ENCODE measurements at regions of chr15 and their contacts with region 1.

Region 1: DNA sequence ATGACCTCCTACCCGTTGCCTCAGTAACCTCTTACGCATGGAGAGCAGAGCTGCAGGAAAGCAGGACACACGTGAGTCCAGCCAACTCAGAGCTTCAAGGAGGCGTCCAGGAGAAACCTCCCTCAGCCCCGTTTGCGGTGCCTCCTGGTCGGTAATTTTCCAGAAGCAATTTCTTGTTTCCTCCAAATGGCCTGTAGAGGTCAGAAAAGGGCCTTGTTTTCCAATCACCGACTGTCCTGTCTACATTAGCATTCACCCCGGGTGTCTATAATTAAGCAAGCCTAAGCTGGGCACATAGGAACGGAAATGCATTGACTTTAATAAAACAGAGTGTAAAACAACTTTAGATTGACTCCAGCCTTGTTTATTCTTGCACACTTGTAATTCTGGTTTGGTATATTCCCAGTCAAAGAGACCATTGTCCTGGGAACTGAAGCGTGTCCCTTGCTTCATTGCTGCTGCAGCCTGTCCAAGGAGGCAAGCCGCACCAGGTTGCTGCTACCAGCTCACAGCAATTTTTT is 836.2 kb downstream of the AGBL1 start:
- DNase-seq: peak; percentile 10 to 82 (median 47)

Region 2: DNA sequence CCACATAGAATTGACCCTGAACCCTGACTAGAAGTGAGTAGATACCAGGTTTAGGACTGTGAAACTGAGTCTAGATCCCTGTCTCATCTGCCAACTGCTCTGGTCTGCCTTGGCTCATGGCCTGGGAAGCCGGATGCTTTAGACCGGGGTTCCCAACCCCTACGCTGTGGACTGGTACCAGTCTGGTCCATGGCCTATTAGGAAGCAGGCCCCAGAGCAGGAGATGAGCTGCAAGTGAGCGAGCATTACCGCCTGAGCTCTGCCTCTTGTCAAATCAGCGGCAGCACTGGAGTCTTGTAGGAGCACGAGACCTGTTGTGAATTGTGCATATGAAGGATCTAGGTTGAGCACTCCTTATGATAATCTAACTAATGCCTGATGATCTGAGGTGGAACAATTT is 102.0 kb before region 1 on chr15:
- intact Hi-C with region 1: no loop called
- DNase-seq: no peak

Region 3: GRCh38 chr15:86863226-86863915 is 52.5 kb before region 1 on chr15:
- intact Hi-C with region 1: no loop called
- DNase-seq: peak in 1 of 42 donors; percentile 39

Region 4: GRCh38 chr15:88258093-88258641 is 1342.3 kb after region 1 on chr15:
- intact Hi-C with region 1: loop called (anchors 10 kb)
- DNase-seq: peak in 41 of 42 donors; percentile 36 to 88 (median 66)